ENCODE measurements at regions of chr19 and their contacts with region 1.

Region 1: DNA sequence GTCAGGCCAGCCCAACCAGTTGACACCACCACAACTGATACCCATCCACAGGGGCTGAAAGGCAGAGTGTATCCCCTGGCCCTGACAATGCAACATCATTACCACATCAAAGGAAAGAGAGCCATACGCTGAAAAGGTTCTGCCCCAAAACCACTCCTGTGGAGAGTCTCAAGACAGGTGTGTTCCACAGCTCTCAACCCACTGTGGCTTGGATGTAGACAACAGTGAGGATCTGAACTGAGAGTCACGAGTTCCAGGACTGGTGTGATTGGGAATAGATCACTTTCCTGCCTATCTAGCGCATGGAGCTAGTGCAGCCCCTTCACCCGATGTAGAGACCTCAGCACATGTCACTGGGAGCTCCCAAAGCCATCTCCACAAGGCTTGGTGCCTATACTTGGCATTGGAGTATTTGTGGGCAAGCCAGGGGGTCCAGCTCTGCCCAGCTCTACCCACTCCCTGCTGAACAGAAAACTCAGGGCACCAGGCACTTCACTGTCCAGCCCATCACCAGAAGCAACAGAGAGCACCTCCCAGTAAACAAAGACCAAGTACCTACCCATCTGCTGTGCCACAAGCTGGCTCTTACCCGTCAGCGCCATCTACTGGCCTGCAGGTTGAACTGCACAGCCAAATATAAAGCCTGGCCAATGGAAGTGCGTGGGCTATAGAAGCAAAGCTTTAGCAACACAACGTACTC is 579.5 kb downstream of the UQCRFS1 start:
- DNase-seq: peak; percentile 32
- H3K4me3 Mint-ChIP-seq: no peak overlapping the region
- H3K27ac Mint-ChIP-seq: no peak overlapping the region
- H3K4me1 Mint-ChIP-seq: no peaks in the 10 kb centered on the region
- H3K27me3 Mint-ChIP-seq: no peaks in the 10 kb centered on the region

Region 2: GRCh38 chr19:28619816-28620429 is 13.5 kb before region 1 on chr19:
- CTCF ChIA-PET with region 1: interaction called, 10 read pairs
- POLR2A ChIA-PET with region 1: no interaction called
- DNase-seq: no peak
- H3K4me3 Mint-ChIP-seq: no peak overlapping the region
- H3K27ac Mint-ChIP-seq: no peak overlapping the region
- H3K4me1 Mint-ChIP-seq: no peaks in the 10 kb centered on the region
- H3K27me3 Mint-ChIP-seq: no peaks in the 10 kb centered on the region